ENCODE measurements at regions of chr9 and their contacts with region 1.

Region 1: DNA sequence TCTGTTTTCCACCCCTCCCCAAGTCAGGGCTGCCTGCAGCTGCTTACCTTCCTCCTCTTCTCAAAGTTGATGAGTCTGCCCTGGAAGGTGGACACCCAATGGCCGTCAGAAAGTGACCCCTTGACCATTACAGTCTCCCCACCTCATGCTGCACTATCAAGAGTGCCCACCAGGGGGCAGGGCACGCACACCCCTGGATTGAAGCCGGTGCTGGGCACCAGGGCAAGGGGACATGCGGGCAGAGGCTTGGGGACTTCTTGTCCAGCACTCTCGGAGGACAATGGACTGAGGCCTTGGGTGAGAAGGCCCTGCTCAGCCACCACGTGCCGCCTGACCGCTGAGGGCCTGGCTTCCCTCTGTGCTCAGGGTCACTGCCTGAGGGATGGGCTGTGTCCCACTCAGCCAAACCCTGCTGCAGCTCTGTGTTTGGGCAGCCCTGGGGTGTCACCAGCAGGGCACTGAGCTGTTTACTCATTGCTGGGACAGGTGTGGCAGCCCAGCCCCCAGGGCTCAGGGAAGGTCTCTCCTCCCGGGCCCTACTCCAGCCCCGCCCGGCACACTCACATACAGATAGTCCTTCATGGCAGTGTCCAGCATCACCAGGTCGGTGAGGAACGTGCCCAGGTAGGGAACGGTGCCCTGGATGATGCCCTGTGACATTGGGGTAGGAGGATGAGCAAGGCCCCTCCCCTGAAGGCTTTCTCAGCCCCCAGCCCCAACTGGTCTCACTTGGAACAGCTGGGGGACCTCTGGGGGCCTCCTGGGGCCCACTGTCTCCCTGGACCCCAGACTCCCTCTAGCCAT is 17.7 kb downstream of the RALGDS start:
- DNase-seq: peak in 1 of 2 experiments; percentile 93
- H3K4me3 ChIP-seq: no peak overlapping the region
- H3K27ac ChIP-seq: no peak overlapping the region
- H3K4me1 ChIP-seq: peaks cover 0 to 8% (median 3%) of the 10 kb centered on the region in 4 experiments; a peak in 3 of 7 replicates
- H3K27me3 ChIP-seq: no peaks in the 10 kb centered on the region
- CTCF ChIP-seq: peak in 2 of 3 experiments; percentile 92 to 94; a peak in 3 of 4 replicates
- EP300 ChIP-seq: no peak
- POLR2A ChIP-seq: no peak
- RAD21 ChIP-seq: peak; percentile 91 to 92

Region 2: DNA sequence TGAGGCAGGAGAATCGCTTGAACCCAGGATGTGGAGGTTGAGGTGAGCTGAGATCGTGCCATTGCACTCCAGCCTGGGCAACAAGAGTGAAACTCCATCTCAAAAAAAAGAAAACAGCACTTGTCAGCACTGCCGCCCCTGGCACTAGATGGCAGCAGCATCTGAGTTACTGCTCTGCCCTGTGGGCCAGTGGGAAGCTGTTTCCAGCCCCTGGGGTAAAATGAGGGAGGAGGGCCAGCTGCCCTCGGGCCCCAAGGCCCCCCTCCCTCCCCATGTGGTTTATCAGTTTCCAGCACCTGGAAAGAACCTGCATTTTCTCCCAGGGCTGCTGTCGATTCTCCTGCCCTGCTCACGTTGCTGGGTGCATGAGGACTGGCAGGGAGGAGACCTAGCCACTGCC is 54.8 kb before region 1 on chr9:
- CTCF ChIA-PET with region 1: interaction called, 21 read pairs
- POLR2A ChIA-PET with region 1: no interaction called
- DNase-seq: no peak
- H3K4me3 ChIP-seq: no peak overlapping the region
- H3K27ac ChIP-seq: no peak overlapping the region
- H3K4me1 ChIP-seq: no peaks in the 10 kb centered on the region
- H3K27me3 ChIP-seq: no peaks in the 10 kb centered on the region
- CTCF ChIP-seq: peak; percentile 38 to 59 (median 55)
- EP300 ChIP-seq: no peak
- POLR2A ChIP-seq: no peak
- RAD21 ChIP-seq: peak; percentile 44 to 65

Region 3: DNA sequence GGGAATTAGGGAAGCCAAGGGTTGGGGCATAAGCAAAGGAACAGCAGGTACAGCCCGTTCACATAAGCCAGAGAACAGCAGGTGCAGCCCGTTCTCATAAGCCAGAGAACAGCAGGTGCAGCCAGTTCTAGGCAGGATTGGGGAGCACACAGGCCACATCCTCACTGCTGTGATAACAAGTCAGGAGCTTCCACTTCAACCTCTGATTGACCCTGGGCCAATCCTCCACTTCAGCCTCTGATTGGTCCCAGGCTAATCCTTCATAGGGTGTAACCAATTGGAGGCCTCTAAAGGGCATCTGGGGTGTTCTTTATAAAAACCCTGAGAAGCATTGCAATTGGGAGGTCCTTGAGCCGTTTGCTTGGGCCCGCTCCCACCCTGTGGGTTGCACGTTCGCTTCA is 14.1 kb before region 1 on chr9:
- CTCF ChIA-PET with region 1: interaction called, 25 read pairs
- POLR2A ChIA-PET with region 1: no interaction called
- DNase-seq: no peak
- H3K4me3 ChIP-seq: no peak overlapping the region
- H3K27ac ChIP-seq: no peak overlapping the region
- H3K4me1 ChIP-seq: no peaks in the 10 kb centered on the region
- H3K27me3 ChIP-seq: peaks cover 0 to 3% (median 0%) of the 10 kb centered on the region in 4 experiments; a peak in 1 of 7 replicates
- CTCF ChIP-seq: no peak
- EP300 ChIP-seq: no peak
- POLR2A ChIP-seq: no peak
- RAD21 ChIP-seq: no peak

Region 4: GRCh38 chr9:133115448-133116345 is 12.3 kb after region 1 on chr9:
- CTCF ChIA-PET with region 1: interaction called, 56 read pairs
- POLR2A ChIA-PET with region 1: no interaction called
- DNase-seq: no peak
- H3K4me3 ChIP-seq: no peak overlapping the region
- H3K27ac ChIP-seq: no peak overlapping the region
- H3K4me1 ChIP-seq: peaks cover 0 to 11% (median 8%) of the 10 kb centered on the region in 4 experiments; a peak in 6 of 7 replicates
- H3K27me3 ChIP-seq: peaks cover 0 to 34% (median 23%) of the 10 kb centered on the region in 4 experiments; a peak in 5 of 7 replicates
- CTCF ChIP-seq: no peak
- EP300 ChIP-seq: no peak
- POLR2A ChIP-seq: no peak
- RAD21 ChIP-seq: no peak

Region 5: GRCh38 chr9:133121198-133121939 is 18.0 kb after region 1 on chr9 and contains the start of gene RALGDS:
- CTCF ChIA-PET with region 1: interaction called, 56 read pairs
- POLR2A ChIA-PET with region 1: no interaction called
- DNase-seq: peak; percentile 38 to 94
- H3K4me3 ChIP-seq: peak within 1 kb of the TSS; percentile 51 to 79 (median 56)
- H3K27ac ChIP-seq: no peak within 1 kb of the TSS
- H3K4me1 ChIP-seq: peaks cover 0 to 17% (median 6%) of the 10 kb centered on the region in 4 experiments; a peak in 6 of 7 replicates
- H3K27me3 ChIP-seq: peaks cover 0 to 48% (median 33%) of the 10 kb centered on the region in 4 experiments; a peak in 5 of 7 replicates
- CTCF ChIP-seq: no peak
- EP300 ChIP-seq: no peak
- POLR2A ChIP-seq: no peak
- RAD21 ChIP-seq: no peak
- total RNA-seq, gene RALGDS: 11.2 and 14.5 TPM in 2 replicates

Region 6: DNA sequence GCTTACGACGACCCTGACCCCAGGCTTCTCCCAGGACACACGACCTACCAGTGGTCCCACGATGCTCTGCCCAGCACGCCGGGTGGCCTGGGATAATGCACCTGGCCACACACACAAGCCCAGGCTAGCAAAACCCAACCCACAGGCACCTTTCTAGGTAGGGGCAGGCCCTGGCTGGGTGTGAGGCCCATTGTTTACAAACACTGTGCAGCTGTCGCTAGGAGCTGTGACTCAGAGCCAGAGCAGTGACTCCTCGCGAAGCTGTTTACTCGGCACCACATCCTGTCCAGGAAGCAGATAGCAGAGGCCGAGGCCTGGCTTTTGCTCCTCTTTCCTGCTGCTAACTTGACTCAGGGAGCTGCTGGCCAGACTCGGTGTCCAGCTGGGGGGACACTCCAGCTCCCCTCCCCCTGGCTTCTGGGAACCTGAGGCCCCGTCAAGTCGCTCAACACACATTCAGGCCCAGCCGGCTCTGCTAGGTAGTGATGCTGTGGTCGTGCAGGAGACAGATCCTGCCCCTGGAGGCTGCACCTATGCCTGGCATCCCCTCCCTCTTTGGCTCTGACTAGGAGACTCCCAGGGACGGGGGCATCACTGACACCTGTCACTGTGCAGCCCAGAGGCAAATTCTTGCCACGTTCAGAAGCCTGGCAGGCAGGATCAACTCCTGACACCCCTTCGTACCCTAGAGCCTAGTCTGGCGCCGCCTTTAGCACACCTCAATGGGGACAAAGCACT is 30.5 kb after region 1 on chr9:
- CTCF ChIA-PET with region 1: interaction called, 17 read pairs
- POLR2A ChIA-PET with region 1: no interaction called
- DNase-seq: no peak
- H3K4me3 ChIP-seq: no peak overlapping the region
- H3K27ac ChIP-seq: peak overlapping the region; percentile 80
- H3K4me1 ChIP-seq: peaks cover 0 to 13% (median 10%) of the 10 kb centered on the region in 4 experiments; a peak in 5 of 7 replicates
- H3K27me3 ChIP-seq: no peaks in the 10 kb centered on the region; a peak in 1 of 7 replicates
- CTCF ChIP-seq: no peak
- EP300 ChIP-seq: 0 out of 3 replicates have a peak, but pooled peaks of 1 of the 2 experiments have one; percentile 10
- POLR2A ChIP-seq: no peak
- RAD21 ChIP-seq: no peak

Region 7: GRCh38 chr9:133149126-133150107 is 46.0 kb after region 1 on chr9:
- CTCF ChIA-PET with region 1: interaction called, 337 read pairs
- POLR2A ChIA-PET with region 1: interaction called, 7 read pairs
- DNase-seq: peak; percentile 73 to 90
- H3K4me3 ChIP-seq: peak overlapping the region; percentile 73 to 82 (median 76)
- H3K27ac ChIP-seq: no peak overlapping the region; the same call in 1 of the 2 replicates
- H3K4me1 ChIP-seq: peaks cover 0 to 15% (median 11%) of the 10 kb centered on the region in 4 experiments; a peak in 5 of 7 replicates
- H3K27me3 ChIP-seq: peaks cover 0 to 11% (median 0%) of the 10 kb centered on the region in 4 experiments; a peak in 2 of 7 replicates
- CTCF ChIP-seq: peak in 2 of 3 experiments; percentile 1 to 14; a peak in 1 of 4 replicates
- EP300 ChIP-seq: no peak
- POLR2A ChIP-seq: no peak; a peak in 2 of 3 replicates
- RAD21 ChIP-seq: 0 out of 4 replicates have a peak, but pooled peaks of 1 of the 2 experiments have one; percentile 6